Activated B cell treated with CpG ODN at 0.5 μM for 24 hours (primary cell): ENCODE measurements at regions of chr1 and their contacts with region 1.

Region 1: GRCh38 chr1:21869620-21870121 is 57.6 kb downstream of the LDLRAD2 start:
- DNase-seq: no peak
- ATAC-seq: no peak
- H3K4me3 Mint-ChIP-seq: no peak overlapping the region
- H3K27ac Mint-ChIP-seq: no peak overlapping the region
- H3K4me1 Mint-ChIP-seq: peaks cover 21% of the 10 kb centered on the region
- H3K27me3 Mint-ChIP-seq: no peaks in the 10 kb centered on the region
- CTCF ChIP-seq: no peak

Region 2: DNA sequence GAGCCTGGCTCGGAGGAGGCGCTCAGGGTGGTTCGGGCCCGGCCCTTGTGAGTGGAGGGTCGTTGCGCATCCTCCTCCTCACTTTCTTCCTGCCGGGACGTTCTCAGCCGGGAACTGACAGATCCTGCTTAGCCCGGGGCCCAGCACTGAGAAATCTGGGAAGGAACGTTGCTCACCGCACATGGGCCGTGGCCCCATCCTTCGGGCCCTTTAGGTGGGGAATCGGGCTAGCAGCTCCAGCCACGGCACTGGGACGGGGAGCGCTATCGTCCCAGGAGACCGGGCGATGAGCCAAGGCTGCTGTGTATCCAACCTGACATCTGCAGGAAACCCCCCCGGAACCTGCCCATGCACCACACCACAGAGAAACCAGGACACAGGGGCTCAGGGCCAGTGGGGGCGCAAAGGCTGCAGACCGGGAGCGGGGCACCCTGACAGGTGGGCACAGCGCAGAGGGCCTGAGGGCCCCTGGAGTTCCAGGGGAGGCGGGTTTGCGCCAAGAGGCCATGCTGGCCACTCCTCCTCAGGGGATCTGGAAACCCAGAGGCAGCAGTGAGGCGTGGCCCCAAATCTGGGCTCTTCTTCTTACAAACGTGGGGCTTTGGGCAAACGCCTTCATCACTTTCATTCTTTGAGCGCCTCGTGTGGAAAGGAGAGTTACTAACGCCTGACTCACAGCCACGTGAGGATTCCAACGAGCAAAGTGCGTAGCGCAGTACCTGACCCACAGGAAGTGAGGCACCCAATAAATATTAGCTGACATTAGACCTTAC is 1136.9 kb before region 1 on chr1 and contains the start of gene SH2D5:
- CTCF ChIA-PET with region 1: no interaction called
- POLR2A ChIA-PET with region 1: no interaction called
- intact Hi-C with region 1: no loop called
- DNase-seq: peak; percentile 45
- ATAC-seq: peak; percentile 74
- H3K4me3 Mint-ChIP-seq: peak within 1 kb of the TSS; percentile 85
- H3K27ac Mint-ChIP-seq: peak within 1 kb of the TSS; percentile 62
- H3K4me1 Mint-ChIP-seq: peaks cover 29% of the 10 kb centered on the region
- H3K27me3 Mint-ChIP-seq: peaks cover 11% of the 10 kb centered on the region
- CTCF ChIP-seq: no peak
- total RNA-seq, gene SH2D5: 0.69 and 0.89 TPM in 2 replicates

Region 3: GRCh38 chr1:21244986-21245687 is 624.5 kb before region 1 on chr1:
- CTCF ChIA-PET with region 1: no interaction called
- POLR2A ChIA-PET with region 1: no interaction called
- intact Hi-C with region 1: no loop called
- DNase-seq: no peak
- ATAC-seq: peak; percentile 28
- H3K4me3 Mint-ChIP-seq: no peak overlapping the region
- H3K27ac Mint-ChIP-seq: no peak overlapping the region
- H3K4me1 Mint-ChIP-seq: no peaks in the 10 kb centered on the region
- H3K27me3 Mint-ChIP-seq: no peaks in the 10 kb centered on the region
- CTCF ChIP-seq: no peak

Region 4: GRCh38 chr1:21764615-21765423 is 104.9 kb before region 1 on chr1:
- CTCF ChIA-PET with region 1: no interaction called
- POLR2A ChIA-PET with region 1: interaction called, 12 read pairs
- intact Hi-C with region 1: no loop called
- DNase-seq: no peak
- ATAC-seq: no peak
- H3K4me3 Mint-ChIP-seq: no peak overlapping the region
- H3K27ac Mint-ChIP-seq: peak overlapping the region; percentile 57
- H3K4me1 Mint-ChIP-seq: peaks cover 75% of the 10 kb centered on the region
- H3K27me3 Mint-ChIP-seq: no peaks in the 10 kb centered on the region
- CTCF ChIP-seq: no peak

Region 5: GRCh38 chr1:21814241-21814918 is 55.3 kb before region 1 on chr1:
- CTCF ChIA-PET with region 1: no interaction called
- POLR2A ChIA-PET with region 1: no interaction called
- intact Hi-C with region 1: loop called (anchors 2 kb)
- DNase-seq: peak; percentile 53
- ATAC-seq: peak; percentile 78
- H3K4me3 Mint-ChIP-seq: peak overlapping the region; percentile 36
- H3K27ac Mint-ChIP-seq: no peak overlapping the region
- H3K4me1 Mint-ChIP-seq: peaks cover 20% of the 10 kb centered on the region
- H3K27me3 Mint-ChIP-seq: peaks cover 3% of the 10 kb centered on the region
- CTCF ChIP-seq: peak; percentile 18

Region 6: GRCh38 chr1:21852282-21853128 is 17.2 kb before region 1 on chr1:
- CTCF ChIA-PET with region 1: no interaction called
- POLR2A ChIA-PET with region 1: no interaction called
- intact Hi-C with region 1: loop called (anchors 1 kb)
- DNase-seq: no peak
- ATAC-seq: peak; percentile 98
- H3K4me3 Mint-ChIP-seq: peak overlapping the region; percentile 29
- H3K27ac Mint-ChIP-seq: peak overlapping the region; percentile 22
- H3K4me1 Mint-ChIP-seq: peaks cover 11% of the 10 kb centered on the region
- H3K27me3 Mint-ChIP-seq: no peaks in the 10 kb centered on the region
- CTCF ChIP-seq: no peak

Region 7: DNA sequence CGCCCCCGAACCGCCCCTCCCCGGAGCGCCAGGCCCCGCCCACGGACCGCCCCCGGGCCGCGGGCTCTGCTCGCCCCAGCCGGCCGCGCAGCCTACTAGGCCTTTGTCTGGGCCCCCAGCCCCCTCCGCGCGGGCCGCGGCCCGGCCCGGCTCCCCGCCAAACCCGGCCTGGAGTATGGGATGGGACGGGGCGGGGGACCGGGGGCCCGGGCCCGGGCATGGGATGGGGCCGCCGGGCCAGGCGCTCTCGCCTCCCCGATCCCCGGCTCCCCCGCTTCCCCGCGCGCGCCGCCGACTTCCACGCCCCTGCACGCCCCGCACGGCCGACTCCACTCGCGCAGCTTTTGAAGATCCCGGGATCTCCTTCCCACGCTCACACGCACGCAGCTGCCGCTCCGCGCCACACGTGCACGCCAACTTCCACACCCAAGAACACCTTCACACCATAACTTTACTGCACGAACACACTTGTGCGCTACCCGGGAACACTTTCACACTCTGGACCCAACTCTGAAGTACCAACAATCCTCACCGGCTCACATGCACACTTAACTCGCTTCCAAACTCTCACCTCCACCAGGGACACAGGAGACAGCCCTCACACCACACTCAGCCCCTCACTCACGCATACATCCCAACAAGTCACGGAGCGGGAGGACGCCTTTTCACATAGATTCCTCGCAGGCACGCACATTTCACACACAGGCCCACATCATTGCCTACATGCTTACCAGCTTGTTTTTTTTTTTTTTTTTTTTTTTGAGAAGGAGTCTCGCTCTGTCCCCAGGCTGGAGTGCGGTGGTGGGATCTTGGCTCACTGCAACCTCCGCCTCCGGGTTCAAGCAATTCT is 67.9 kb after region 1 on chr1:
- CTCF ChIA-PET with region 1: no interaction called
- POLR2A ChIA-PET with region 1: no interaction called
- intact Hi-C with region 1: loop called (anchors 10 kb)
- DNase-seq: peak; percentile 71
- ATAC-seq: peak; percentile 95
- H3K4me3 Mint-ChIP-seq: peak overlapping the region; percentile 84
- H3K27ac Mint-ChIP-seq: peak overlapping the region; percentile 27
- H3K4me1 Mint-ChIP-seq: peaks cover 7% of the 10 kb centered on the region
- H3K27me3 Mint-ChIP-seq: peaks cover 24% of the 10 kb centered on the region
- CTCF ChIP-seq: no peak